ENCODE measurements at regions of chr16 and their contacts with region 1.

Region 1: DNA sequence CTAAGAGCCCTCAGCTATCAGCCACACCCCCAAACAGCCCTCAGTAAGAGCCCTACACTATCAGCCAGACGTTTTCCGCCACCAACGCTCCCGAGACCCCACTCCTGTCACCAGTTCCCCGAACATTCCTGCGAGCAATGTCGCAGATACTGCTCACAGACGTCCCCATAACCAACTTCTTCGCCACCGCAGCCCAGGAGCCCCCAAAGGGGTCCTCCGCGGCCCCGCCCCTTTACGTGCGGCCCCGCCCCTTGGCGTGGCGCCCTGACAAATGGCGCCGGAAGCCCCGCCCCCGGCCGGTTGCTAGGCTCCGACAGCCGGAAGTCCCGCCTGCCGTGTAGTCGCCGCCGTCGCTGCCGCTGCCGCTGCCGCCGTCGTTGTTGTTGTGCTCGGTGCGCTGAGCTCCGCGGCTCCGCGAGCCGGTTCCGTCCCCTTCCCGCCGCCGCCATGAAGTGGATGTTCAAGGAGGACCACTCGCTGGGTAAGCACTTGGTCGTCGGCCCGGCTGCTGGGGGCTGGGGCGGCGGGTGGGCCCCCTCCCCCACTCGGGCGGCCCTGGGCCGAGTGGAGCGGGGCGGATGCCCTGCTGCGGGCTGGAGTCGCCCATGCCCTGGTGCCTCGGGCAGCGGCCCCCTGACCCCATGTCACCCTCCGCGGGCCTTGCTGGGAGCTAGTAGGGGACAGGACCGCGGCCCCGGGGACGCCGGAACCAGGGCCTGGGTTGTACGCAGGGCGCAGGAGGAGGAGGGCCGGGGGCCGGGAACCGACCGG is at the start of gene GABARAPL2:
- H3K4me3 Mint-ChIP-seq: peak within 1 kb of the TSS; percentile 96
- H3K27ac Mint-ChIP-seq: peak within 1 kb of the TSS; percentile 84
- H3K4me1 Mint-ChIP-seq: peaks cover 44% of the 10 kb centered on the region
- H3K27me3 Mint-ChIP-seq: peaks cover 19% of the 10 kb centered on the region

Region 2: DNA sequence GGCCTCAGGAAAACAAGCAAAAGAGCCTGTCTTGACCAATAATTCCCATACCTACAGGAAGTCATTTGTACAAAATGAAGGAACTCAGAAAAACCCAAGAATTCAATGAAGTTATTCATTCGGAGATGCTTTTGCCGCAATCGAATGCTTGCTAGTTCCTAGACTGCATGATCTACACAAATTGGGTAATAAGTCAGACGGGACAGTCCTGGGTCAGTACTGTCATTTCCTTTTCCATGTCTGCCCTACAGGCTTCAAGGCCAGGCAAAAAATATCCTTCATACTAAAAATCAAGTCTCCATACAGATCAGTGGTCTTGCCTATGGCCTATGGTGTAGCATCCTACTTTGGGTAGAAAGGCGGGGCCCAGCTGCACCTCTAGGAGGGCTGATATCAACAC is 204.3 kb before region 1 on chr16:
- intact Hi-C with region 1: no loop called
- H3K4me3 Mint-ChIP-seq: no peak overlapping the region
- H3K27ac Mint-ChIP-seq: no peak overlapping the region
- H3K4me1 Mint-ChIP-seq: no peaks in the 10 kb centered on the region
- H3K27me3 Mint-ChIP-seq: peaks cover 83% of the 10 kb centered on the region

Region 3: DNA sequence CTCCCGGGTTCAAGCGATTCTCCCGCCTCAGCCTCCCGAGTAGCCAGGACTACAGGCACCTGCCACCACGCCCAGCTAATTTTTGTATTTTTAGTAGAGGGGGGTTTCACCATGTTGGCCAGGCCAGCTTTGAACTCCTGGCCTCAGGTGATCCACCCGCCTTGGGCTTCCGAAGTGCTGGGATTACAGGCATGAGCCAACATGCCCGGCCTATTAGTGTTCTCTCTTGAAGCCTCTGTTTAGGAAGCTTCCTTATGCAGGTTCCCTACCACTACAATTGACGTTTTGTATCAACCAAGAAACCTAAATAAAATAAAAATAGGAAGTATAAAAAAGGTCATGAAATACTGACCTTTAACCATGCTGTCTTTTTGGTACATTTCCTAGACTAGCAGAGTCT is 46.3 kb before region 1 on chr16:
- intact Hi-C with region 1: loop called (anchors 5 kb)
- H3K4me3 Mint-ChIP-seq: no peak overlapping the region
- H3K27ac Mint-ChIP-seq: no peak overlapping the region
- H3K4me1 Mint-ChIP-seq: peaks cover 12% of the 10 kb centered on the region
- H3K27me3 Mint-ChIP-seq: peaks cover 13% of the 10 kb centered on the region

Region 4: DNA sequence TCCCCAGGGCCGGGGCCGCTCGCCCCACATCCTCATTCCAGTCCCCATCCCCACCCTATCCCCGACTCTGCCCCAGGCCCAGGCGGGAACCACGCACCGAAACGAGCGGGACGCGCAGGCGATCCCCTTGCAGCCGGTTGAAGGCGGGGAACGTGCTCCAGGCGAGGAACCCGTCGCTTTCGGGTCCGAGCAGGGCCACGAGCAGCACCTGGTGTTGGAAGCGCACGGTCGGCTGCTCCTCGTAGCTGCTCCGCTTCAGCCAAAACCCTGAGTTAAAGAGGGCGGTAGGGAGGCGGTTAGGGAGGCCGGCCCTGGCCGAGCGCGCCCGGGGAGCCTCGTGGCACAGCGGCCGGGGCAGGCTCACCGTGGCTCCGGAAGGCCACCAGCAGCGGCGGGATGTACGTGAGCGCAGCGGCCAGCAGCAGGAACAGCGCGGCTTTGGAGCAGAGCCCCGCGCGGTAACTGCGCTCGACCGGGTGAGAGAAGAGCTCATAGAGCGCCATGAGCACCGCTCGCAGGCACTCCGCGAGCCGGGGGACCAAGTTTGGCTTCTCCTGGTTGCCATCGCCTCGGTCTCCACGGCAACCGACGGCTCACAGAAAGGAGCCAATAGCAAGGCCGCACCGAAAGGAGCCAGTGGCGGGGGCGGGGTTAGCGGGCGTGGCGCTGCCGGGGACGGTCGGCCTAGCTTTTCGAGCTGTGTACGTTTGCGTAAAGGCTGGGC is 10.4 kb before region 1 on chr16 and contains the start of gene TMEM231:
- intact Hi-C with region 1: loop called (anchors 1 kb)
- H3K4me3 Mint-ChIP-seq: peak within 1 kb of the TSS; percentile 82
- H3K27ac Mint-ChIP-seq: peak within 1 kb of the TSS; percentile 67
- H3K4me1 Mint-ChIP-seq: peaks cover 16% of the 10 kb centered on the region
- H3K27me3 Mint-ChIP-seq: peaks cover 32% of the 10 kb centered on the region